CD14-positive monocyte (primary cell): ENCODE measurements at regions of chr17 and their contacts with region 1.

Region 1: GRCh38 chr17:79991140-79991923 is 44.3 kb downstream of the TBC1D16 start:
- DNase-seq: peak; percentile 68 to 76 (median 71)
- H3K4me3 ChIP-seq: peak overlapping the region in 2 of 3 experiments; percentile 36 to 67
- H3K4me3 Mint-ChIP-seq: peak overlapping the region; percentile 64 to 83
- H3K27ac ChIP-seq: no peak overlapping the region
- H3K27ac Mint-ChIP-seq: no peak overlapping the region
- H3K4me1 ChIP-seq: peaks cover 31 to 45% of the 10 kb centered on the region in 2 donors
- H3K4me1 Mint-ChIP-seq: peaks cover 33% of the 10 kb centered on the region
- H3K27me3 ChIP-seq: peaks cover 0 to 7% of the 10 kb centered on the region in 2 donors
- H3K27me3 Mint-ChIP-seq: peaks cover 15 to 28% (median 17%) of the 10 kb centered on the region in 3 donors
- CTCF ChIP-seq: peak; percentile 70

Region 2: DNA sequence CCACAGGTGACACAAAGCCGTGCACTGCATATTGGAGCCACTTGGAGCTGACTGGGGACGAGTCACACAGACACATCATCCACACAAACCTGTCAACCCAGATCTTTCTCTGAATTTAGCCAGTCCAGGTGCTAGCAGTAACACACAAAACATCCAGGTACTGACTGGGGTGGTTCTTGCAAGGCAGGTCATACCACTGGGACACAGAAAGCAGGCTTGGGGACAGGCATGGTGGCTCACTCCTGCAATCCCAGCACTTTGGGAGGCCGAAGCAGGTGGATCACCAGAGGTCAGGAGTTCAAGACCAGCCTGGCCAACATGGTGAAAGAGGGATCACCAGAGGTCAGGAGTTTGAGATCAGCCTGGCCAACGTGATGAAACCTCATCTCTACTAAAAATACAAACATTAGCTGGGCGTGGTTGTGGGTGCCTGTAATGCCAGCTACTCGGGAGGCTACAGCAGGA is 245.7 kb before region 1 on chr17:
- intact Hi-C with region 1: loop called in 1 of 2 experiments (anchors 2 kb)
- DNase-seq: no peak
- H3K4me3 ChIP-seq: peak overlapping the region in 1 of 3 experiments; percentile 20
- H3K4me3 Mint-ChIP-seq: peak overlapping the region; percentile 65 to 78
- H3K27ac ChIP-seq: no peak overlapping the region
- H3K27ac Mint-ChIP-seq: peak overlapping the region in 1 of 7 donors; percentile 39
- H3K4me1 ChIP-seq: peaks cover 6 to 13% of the 10 kb centered on the region in 2 donors
- H3K4me1 Mint-ChIP-seq: peaks cover 14% of the 10 kb centered on the region
- H3K27me3 ChIP-seq: peaks cover 36 to 64% of the 10 kb centered on the region in 2 donors
- H3K27me3 Mint-ChIP-seq: peaks cover 58 to 85% (median 64%) of the 10 kb centered on the region in 3 donors
- CTCF ChIP-seq: no peak

Region 3: DNA sequence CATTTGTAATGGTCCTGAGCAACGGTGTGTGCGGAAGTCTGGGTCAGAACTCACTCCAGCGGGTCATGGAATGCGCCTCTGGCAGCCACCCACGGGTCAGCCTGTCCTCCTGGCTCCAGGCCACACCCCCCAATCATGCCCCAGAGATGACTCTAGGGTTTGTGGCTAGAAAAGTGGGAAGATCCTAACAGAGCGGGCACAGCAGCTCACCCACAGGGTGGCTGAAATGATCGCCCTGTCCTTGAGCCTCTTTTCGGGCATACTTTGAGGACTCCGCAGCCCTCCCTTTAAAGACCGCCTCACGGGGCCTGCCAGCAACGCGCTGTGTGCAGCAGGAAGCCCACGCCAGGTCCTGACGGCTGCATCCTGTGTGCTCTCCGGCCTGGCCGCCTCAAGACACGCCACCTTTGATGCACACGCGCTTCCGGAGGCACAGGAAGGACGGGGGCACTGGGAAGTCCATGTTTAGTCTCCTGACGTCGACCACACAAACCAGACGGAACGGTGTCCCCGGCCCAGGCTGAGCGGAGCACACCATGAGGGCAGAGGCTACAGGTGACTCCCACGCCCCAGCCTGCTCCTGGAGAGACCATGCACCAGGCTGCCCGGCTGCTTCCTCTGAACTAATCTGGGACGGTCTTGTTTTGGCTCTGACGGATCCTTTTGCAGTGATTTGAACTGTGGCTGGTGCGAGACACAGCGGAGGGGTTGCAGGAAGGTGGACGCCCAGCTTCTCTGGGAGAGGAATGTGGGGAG is 48.6 kb before region 1 on chr17:
- intact Hi-C with region 1: no loop called
- DNase-seq: peak in 1 of 3 donors; percentile 17
- H3K4me3 ChIP-seq: no peak overlapping the region
- H3K4me3 Mint-ChIP-seq: peak overlapping the region in 1 of 2 donors; percentile 61
- H3K27ac ChIP-seq: no peak overlapping the region
- H3K27ac Mint-ChIP-seq: peak overlapping the region in 2 of 7 donors; percentile 8 to 40
- H3K4me1 ChIP-seq: peaks cover 4 to 10% of the 10 kb centered on the region in 2 donors
- H3K4me1 Mint-ChIP-seq: peaks cover 9% of the 10 kb centered on the region
- H3K27me3 ChIP-seq: peaks cover 0 to 5% of the 10 kb centered on the region in 2 donors
- H3K27me3 Mint-ChIP-seq: peaks cover 11 to 16% (median 15%) of the 10 kb centered on the region in 3 donors
- CTCF ChIP-seq: no peak